HepG2 (cell line): ENCODE measurements at regions of chr9 and their contacts with region 1.

Region 1: GRCh38 chr9:15755660-15756059 is 202.8 kb downstream of the CCDC171 start:
- DNase-seq: no peak
- ATAC-seq: no peak
- H3K4me3 ChIP-seq: no peak overlapping the region
- H3K27ac ChIP-seq: no peak overlapping the region
- H3K4me1 ChIP-seq: no peaks in the 10 kb centered on the region
- H3K27me3 ChIP-seq: no peaks in the 10 kb centered on the region
- CTCF ChIP-seq: no peak
- EP300 ChIP-seq: no peak
- POLR2A ChIP-seq: no peak
- RAD21 ChIP-seq: no peak

Region 2: GRCh38 chr9:15622318-15622971 is 133.2 kb before region 1 on chr9:
- CTCF ChIA-PET with region 1: no interaction called
- POLR2A ChIA-PET with region 1: no interaction called
- in situ Hi-C with region 1: no loop called
- intact Hi-C with region 1: loop called (anchors 5 kb)
- DNase-seq: no peak
- ATAC-seq: no peak
- H3K4me3 ChIP-seq: no peak overlapping the region
- H3K27ac ChIP-seq: no peak overlapping the region
- H3K4me1 ChIP-seq: no peaks in the 10 kb centered on the region
- H3K27me3 ChIP-seq: no peaks in the 10 kb centered on the region
- CTCF ChIP-seq: peak; percentile 17; the same call in 1 of the 2 replicates
- EP300 ChIP-seq: no peak
- POLR2A ChIP-seq: no peak
- RAD21 ChIP-seq: no peak

Region 3: GRCh38 chr9:15725953-15726352 is 29.7 kb before region 1 on chr9:
- CTCF ChIA-PET with region 1: no interaction called
- POLR2A ChIA-PET with region 1: no interaction called
- in situ Hi-C with region 1: no loop called
- intact Hi-C with region 1: no loop called
- DNase-seq: no peak
- ATAC-seq: no peak
- H3K4me3 ChIP-seq: no peak overlapping the region
- H3K27ac ChIP-seq: no peak overlapping the region
- H3K4me1 ChIP-seq: no peaks in the 10 kb centered on the region
- H3K27me3 ChIP-seq: no peaks in the 10 kb centered on the region
- CTCF ChIP-seq: no peak
- EP300 ChIP-seq: no peak
- POLR2A ChIP-seq: no peak
- RAD21 ChIP-seq: no peak